H1 (cell line): ENCODE measurements at regions of chr9 and their contacts with region 1.

Region 1: GRCh38 chr9:99184475-99185347 is 37.0 kb downstream of the ALG2 start:
- DNase-seq: peak; percentile 81 to 90
- H3K4me3 ChIP-seq: no peak overlapping the region
- H3K27ac ChIP-seq: no peak overlapping the region
- H3K4me1 ChIP-seq: peaks cover 0 to 3% (median 1%) of the 10 kb centered on the region in 4 experiments; a peak in 2 of 7 replicates
- H3K27me3 ChIP-seq: no peaks in the 10 kb centered on the region
- CTCF ChIP-seq: peak; percentile 81 to 97 (median 81)
- EP300 ChIP-seq: no peak
- POLR2A ChIP-seq: no peak
- RAD21 ChIP-seq: peak; percentile 93 to 95

Region 2: GRCh38 chr9:99162759-99163364 is 21.8 kb before region 1 on chr9:
- CTCF ChIA-PET with region 1: interaction called, 42 read pairs
- POLR2A ChIA-PET with region 1: interaction called, 5 read pairs
- DNase-seq: no peak
- H3K4me3 ChIP-seq: no peak overlapping the region
- H3K27ac ChIP-seq: no peak overlapping the region
- H3K4me1 ChIP-seq: peaks cover 0 to 5% (median 4%) of the 10 kb centered on the region in 4 experiments; a peak in 4 of 7 replicates
- H3K27me3 ChIP-seq: no peaks in the 10 kb centered on the region
- CTCF ChIP-seq: peak in 2 of 3 experiments; percentile 47 to 55; a peak in 2 of 4 replicates
- EP300 ChIP-seq: no peak
- POLR2A ChIP-seq: no peak
- RAD21 ChIP-seq: peak; percentile 82

Region 3: DNA sequence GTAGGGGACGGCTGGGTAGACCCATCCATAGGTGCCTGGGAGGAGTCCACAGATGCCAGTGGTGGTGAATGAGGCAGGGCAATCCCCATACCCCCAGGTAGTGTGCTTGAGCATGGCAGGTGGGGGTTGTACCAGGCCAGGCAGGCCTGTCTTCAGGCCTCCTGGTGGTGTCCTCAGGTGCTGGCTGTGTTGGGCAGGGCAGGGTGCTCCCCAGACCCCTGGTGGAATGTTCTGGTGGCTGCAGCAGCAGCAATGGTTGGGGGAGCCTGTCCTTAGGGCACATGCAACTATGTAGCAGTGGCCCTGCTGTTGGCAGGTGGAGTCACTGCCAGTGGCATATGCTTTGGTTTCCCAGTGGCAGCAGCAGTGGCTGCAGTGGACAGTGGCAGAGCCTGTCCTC is 27.0 kb after region 1 on chr9:
- CTCF ChIA-PET with region 1: interaction called, 10 read pairs
- POLR2A ChIA-PET with region 1: interaction called, 3 read pairs
- DNase-seq: no peak
- H3K4me3 ChIP-seq: no peak overlapping the region
- H3K27ac ChIP-seq: no peak overlapping the region
- H3K4me1 ChIP-seq: no peaks in the 10 kb centered on the region
- H3K27me3 ChIP-seq: no peaks in the 10 kb centered on the region
- CTCF ChIP-seq: peak; percentile 38 to 58 (median 48)
- EP300 ChIP-seq: no peak
- POLR2A ChIP-seq: no peak
- RAD21 ChIP-seq: peak in 1 of 2 experiments; percentile 28; a peak in 3 of 4 replicates

Region 4: DNA sequence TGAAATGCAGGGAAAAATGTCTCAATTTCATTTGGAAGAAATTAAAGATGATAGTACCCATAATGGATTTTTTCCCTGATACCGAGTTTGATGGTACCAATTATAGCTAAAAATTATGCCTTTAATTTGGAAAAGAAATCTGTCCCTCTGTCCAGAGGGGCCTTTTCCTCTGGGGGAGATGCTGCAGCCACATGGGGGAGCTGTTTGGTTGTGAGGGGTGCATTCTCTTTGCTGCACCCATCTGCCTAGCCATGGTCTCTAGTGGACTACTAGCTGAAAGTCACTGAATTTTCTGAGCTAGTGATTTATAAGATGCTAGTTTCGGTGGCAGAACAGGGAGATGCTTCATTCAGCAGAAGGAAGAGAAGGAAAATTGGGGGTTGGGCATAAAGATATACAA is 47.0 kb after region 1 on chr9:
- CTCF ChIA-PET with region 1: interaction called, 34 read pairs
- POLR2A ChIA-PET with region 1: no interaction called
- DNase-seq: peak in 1 of 2 experiments; percentile 55
- H3K4me3 ChIP-seq: no peak overlapping the region
- H3K27ac ChIP-seq: no peak overlapping the region
- H3K4me1 ChIP-seq: no peaks in the 10 kb centered on the region
- H3K27me3 ChIP-seq: no peaks in the 10 kb centered on the region
- CTCF ChIP-seq: peak; percentile 68 to 73 (median 69)
- EP300 ChIP-seq: no peak
- POLR2A ChIP-seq: no peak
- RAD21 ChIP-seq: peak; percentile 58 to 65

Region 5: DNA sequence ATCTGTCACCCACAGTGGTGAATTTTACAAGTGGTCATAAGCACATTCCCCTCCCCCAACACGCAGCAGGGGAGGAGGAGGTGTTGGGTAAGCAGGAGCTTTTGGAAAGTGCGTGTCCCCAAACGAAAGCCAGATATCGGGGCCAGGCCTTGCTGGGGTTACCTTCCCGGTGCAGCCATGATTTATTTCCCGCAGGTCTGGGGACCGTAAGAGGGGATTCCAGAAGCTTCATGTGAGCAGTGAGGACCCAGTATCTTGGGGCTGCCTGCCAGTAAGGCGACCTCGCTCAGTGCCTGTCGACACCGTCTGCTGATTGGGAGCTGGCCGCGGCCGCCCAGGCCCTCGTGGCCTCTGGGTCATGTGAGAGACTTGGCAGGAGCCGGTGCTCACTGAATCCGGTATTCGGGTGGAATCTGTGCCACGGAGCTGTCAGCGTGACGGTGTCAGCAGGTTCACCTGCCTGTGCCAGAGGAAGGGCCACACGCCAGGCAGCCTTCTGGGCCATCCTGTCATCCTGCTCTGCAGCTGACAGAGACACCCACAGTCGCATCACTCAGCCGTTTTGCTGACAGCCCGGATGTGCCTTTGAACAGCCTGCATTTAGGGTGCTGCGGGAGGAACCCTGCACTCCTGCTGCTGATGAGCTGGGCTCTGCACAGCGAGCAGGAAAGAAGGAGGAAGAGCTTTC is 74.7 kb after region 1 on chr9:
- CTCF ChIA-PET with region 1: interaction called, 21 read pairs
- POLR2A ChIA-PET with region 1: no interaction called
- DNase-seq: peak in 1 of 2 experiments; percentile 67
- H3K4me3 ChIP-seq: no peak overlapping the region
- H3K27ac ChIP-seq: no peak overlapping the region
- H3K4me1 ChIP-seq: peaks cover 0 to 6% (median 5%) of the 10 kb centered on the region in 4 experiments; a peak in 5 of 7 replicates
- H3K27me3 ChIP-seq: no peaks in the 10 kb centered on the region; a peak in 2 of 7 replicates
- CTCF ChIP-seq: no peak
- EP300 ChIP-seq: no peak
- POLR2A ChIP-seq: no peak
- RAD21 ChIP-seq: no peak